HCT116 (cell line): ENCODE measurements at regions of chr11 and their contacts with region 1.

Region 1: DNA sequence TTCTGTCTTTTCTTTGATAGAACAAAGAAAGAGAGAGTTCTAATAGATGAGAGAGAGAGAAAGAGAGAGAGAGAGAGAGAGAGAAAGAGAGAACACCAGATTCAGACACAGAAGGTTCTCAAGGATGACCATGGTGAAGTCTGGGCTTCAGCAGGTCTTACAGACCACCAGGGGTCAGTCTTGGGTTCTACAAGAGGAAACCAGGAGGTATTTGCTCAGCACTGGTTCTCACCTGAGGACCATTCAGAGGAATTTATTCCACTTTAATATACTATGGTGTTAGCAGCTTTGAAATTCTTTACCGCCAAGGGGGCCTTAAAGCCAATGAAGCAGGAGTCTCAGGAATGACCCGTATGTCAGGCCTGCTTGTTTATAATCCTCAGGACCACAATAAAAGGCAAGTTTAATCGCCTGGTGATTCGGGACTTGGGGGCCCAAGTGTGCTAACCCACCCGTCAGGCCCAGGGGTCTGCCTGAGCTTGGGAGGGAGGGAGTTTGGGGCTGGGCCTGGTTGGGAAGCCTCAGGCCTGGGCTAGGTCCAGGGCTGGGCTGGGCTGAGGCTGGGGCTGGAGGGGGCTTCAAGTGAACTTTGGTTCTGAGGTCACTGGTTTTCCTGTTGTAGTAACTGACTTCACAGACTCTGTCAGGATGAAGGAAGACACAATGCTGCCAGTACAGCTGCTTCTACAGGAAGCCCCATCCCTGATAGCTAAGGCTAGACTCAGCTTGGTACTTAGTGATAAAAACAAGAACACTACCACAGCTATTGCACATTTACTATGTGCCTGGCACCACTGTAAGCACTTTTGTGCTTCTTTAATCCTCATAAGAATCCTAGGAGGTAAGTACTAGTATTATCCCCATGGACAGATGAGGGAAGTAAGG is 179.2 kb upstream of the ZBED5 start:
- DNase-seq: peak; percentile 64
- ATAC-seq: peak; percentile 97
- H3K4me3 ChIP-seq: no peak overlapping the region
- H3K27ac ChIP-seq: no peak overlapping the region
- H3K4me1 ChIP-seq: no peaks in the 10 kb centered on the region
- H3K27me3 ChIP-seq: no peaks in the 10 kb centered on the region
- CTCF ChIP-seq: peak; percentile 76 to 80 (median 78)
- POLR2A ChIP-seq: no peak
- RAD21 ChIP-seq: peak; percentile 84

Region 2: GRCh38 chr11:10982704-10983510 is 54.2 kb before region 1 on chr11:
- CTCF ChIA-PET with region 1: no interaction called
- POLR2A ChIA-PET with region 1: no interaction called
- RAD21 ChIA-PET with region 1: no interaction called
- intact Hi-C with region 1: no loop called
- DNase-seq: peak; percentile 4
- ATAC-seq: peak; percentile 76
- H3K4me3 ChIP-seq: no peak overlapping the region
- H3K27ac ChIP-seq: no peak overlapping the region
- H3K4me1 ChIP-seq: peaks cover 0 to 14% of the 10 kb centered on the region in 2 experiments; a peak in 2 of 4 replicates
- H3K27me3 ChIP-seq: no peaks in the 10 kb centered on the region
- CTCF ChIP-seq: no peak
- POLR2A ChIP-seq: no peak
- RAD21 ChIP-seq: no peak

Region 3: DNA sequence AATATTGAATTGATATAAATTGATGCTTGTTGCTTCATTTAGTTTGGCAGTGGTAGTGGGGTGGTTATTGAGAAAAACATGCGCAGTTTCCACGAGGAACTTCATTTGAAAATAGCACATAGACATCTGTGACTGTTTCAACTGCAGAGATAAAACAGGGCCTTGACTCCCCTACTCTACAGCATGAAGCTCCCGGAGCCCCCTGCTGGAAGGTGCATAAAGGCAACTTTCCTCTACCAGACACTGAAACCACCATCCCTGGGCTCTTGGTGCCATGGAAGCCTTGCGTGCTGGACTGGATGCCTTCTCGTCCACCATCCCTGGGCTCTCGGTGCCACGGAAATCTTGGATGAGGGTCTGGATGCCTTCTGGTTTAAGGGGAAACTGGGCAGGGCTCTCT is 120.1 kb after region 1 on chr11:
- CTCF ChIA-PET with region 1: no interaction called
- POLR2A ChIA-PET with region 1: no interaction called
- RAD21 ChIA-PET with region 1: no interaction called
- intact Hi-C with region 1: loop called (anchors 5 kb)
- DNase-seq: peak; percentile 21
- ATAC-seq: peak; percentile 81
- H3K4me3 ChIP-seq: no peak overlapping the region
- H3K27ac ChIP-seq: no peak overlapping the region
- H3K4me1 ChIP-seq: no peaks in the 10 kb centered on the region
- H3K27me3 ChIP-seq: no peaks in the 10 kb centered on the region; the same call in 1 of the 2 replicates
- CTCF ChIP-seq: peak; percentile 49 to 73 (median 52); a peak in 5 of 6 replicates
- POLR2A ChIP-seq: no peak
- RAD21 ChIP-seq: peak; percentile 47

Region 4: DNA sequence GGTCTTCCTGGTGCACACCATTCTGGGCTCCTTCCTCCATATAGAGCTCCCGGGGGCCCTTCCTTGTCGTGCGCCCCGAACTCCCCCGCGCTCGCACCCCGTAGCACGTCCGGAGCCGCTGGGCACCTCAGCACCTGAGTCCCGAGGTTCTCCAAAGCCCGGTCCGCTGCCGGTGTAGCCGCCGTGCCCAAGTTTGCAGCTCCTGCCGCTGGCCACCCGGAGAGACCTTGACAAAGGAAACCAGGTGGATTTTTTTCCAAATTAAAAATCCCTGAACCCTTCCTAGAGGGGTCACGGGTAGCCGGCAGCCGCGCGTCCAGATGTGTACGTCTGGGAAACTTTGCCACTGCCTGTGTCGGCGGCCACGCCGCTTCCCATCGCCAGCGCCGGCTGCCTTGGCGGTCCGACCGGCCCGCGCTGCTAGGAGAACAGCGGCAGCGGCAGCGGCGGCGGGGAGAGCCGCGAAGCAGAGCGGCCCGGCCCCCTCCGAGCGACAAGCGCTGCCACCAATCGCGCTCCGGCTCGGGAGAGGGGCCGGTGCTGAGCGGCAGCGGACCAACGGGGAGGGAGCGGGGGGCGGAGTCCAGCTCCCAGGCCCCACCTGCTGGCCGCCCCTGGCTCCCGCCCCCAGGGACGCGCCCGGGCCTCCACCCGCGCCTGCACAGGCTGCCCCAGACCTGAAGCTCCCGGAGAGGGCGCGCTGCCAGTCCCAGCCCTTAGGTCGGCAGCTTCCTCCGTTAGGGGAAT is 584.7 kb after region 1 on chr11 and contains the start of gene GALNT18:
- CTCF ChIA-PET with region 1: no interaction called
- POLR2A ChIA-PET with region 1: no interaction called
- RAD21 ChIA-PET with region 1: no interaction called
- intact Hi-C with region 1: loop called (anchors 10 kb)
- DNase-seq: peak; percentile 81
- ATAC-seq: peak; percentile 87
- H3K4me3 ChIP-seq: peak within 1 kb of the TSS; percentile 85 to 91
- H3K27ac ChIP-seq: peak within 1 kb of the TSS; percentile 58
- H3K4me1 ChIP-seq: peaks cover 17 to 23% of the 10 kb centered on the region in 2 experiments; a peak in 3 of 4 replicates
- H3K27me3 ChIP-seq: no peaks in the 10 kb centered on the region
- CTCF ChIP-seq: peak; percentile 20 to 42 (median 29); a peak in 3 of 6 replicates
- POLR2A ChIP-seq: peak; percentile 18
- RAD21 ChIP-seq: peak; percentile 25; the same call in 1 of the 2 replicates
- total RNA-seq, gene GALNT18: 19.9 TPM